Right ventricle myocardium inferior (tissue), 1 donor: ENCODE measurements at regions of chr9 and their contacts with region 1.

Region 1: GRCh38 chr9:17810728-17811571 is 232.1 kb downstream of the SH3GL2 start:
- DNase-seq: no peak
- ATAC-seq: no peak

Region 2: DNA sequence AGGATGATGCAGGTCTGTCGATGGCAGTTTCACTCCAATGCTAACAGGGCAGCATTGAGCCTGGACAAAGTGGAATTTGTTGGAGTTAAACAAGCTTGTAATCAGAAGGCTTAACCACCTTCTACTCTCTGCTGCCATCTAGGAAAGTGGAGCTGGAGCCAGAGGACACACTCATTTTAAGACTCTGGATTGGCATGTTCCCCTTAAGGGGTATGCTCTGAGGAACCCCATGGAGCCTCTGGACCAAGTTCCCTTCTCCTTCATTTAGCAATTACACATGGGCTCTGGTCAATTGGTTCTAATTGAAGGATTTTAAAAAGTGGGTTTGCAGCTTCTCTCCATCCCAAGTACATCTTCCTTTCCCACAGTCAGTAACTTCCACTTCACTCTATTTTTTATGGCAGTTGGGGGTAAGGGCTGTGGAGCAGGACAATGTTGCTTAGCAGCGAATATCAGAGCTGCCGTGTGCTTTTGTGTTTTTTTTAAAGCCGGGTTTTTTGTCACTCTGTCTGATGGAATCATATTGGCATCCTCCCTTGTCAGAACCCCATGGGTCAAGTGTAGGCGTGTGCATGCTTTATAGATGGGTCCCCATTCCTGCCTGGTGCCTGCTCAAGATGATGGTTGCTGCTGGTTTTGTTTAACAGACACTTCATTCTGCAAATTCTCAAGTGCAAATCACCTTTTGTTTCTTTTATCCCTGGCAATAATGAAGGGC is 332.2 kb after region 1 on chr9:
- intact Hi-C with region 1: loop called (anchors 5 kb)
- DNase-seq: no peak
- ATAC-seq: no peak

Region 3: DNA sequence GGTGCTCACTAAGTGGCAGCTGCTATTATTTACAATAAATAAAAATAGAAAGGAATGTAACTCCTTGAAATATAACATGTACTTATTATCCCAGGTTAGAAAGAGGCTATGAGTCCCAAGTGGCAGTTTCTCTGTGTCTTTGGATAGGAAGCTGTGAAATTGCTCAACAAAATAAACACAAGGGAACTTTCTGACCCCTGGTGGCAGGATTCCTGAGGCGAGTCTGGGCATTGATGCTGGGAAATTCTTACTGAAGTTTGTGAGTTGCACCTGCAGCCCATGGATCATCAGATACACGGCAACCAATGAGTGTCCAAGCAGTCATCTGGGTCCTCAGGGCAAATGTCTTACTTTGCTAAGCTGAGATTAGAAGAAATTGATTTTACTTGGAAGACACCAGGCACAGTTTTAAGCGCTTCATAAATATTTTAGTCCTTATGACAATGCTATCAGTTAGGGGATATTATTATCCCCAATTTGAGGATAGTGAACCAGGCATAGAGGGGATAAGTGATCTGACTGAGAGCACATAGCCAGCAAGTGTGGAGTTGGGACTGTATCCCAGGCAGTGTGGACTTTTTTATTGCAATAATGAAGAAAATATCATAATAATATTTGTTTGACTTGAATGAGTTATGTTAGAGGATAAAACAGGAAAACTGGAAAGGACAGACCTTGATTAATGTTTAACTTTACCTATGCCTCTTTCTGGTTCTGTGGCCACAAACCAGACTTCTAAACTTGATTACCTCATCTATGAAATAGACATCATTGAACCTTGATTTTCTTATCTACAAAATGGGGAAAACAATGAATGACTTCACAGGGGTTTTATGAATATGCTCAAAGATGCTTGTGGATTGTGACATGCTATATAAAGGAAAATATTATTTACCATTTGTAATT is 397.5 kb after region 1 on chr9:
- intact Hi-C with region 1: loop called (anchors 2 kb)
- DNase-seq: no peak
- ATAC-seq: no peak

Region 4: DNA sequence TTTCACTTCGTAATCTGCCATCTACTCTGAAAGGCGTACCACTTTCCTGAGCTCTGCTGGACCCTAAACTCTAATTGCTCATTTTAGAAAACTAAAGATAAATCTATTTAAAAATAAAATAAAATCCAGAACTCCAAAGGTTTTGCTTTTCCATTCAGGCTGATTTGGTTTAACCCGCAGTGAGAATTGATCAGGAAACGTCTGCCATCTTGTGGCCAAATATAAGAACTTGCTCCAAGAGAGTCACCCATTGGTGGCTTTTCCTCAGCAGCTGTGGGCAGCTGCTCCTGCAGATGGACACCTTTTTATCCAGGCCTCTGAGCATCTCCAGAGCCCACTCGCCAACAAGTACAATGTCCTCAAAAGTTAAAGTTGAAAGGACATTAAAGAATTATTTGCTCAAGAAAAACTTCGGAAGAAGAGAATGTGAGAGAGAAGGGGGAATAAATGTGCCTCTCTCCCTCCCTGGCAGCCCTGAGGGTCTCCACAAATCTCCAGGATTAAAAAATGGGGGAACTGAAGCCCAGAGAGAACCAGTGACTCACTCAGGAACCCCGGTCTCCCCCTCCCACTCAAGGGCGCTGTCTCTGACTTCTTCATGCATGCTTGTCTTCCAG is 1218.0 kb after region 1 on chr9:
- intact Hi-C with region 1: loop called (anchors 5 kb)
- DNase-seq: no peak
- ATAC-seq: peak; percentile 74